GM12878 (cell line): ENCODE measurements at regions of chr22 and their contacts with region 1.

Region 1: GRCh38 chr22:24768537-24769374 is 5.8 kb downstream of the PIWIL3 start:
- DNase-seq: no peak
- ATAC-seq: peak; percentile 82
- H3K4me3 ChIP-seq: no peak overlapping the region
- H3K27ac ChIP-seq: no peak overlapping the region
- H3K4me1 ChIP-seq: no peaks in the 10 kb centered on the region
- H3K27me3 ChIP-seq: no peaks in the 10 kb centered on the region; a peak in 1 of 4 replicates
- CTCF ChIP-seq: peak; percentile 4 to 56 (median 24); a peak in 3 of 6 replicates
- EP300 ChIP-seq: no peak
- POLR2A ChIP-seq: no peak
- RAD21 ChIP-seq: peak; percentile 69

Region 2: GRCh38 chr22:24758164-24758799 is 10.5 kb before region 1 on chr22:
- CTCF ChIA-PET with region 1: interaction called, 22 read pairs
- POLR2A ChIA-PET with region 1: no interaction called
- RAD21 ChIA-PET with region 1: interaction called, 3 read pairs
- SMC1A ChIA-PET with region 1: interaction called, 4 read pairs
- in situ Hi-C with region 1: no loop called
- intact Hi-C with region 1: no loop called
- DNase-seq: no peak
- ATAC-seq: peak; percentile 45; the same call in 2 of the 3 replicates
- H3K4me3 ChIP-seq: no peak overlapping the region
- H3K27ac ChIP-seq: no peak overlapping the region
- H3K4me1 ChIP-seq: no peaks in the 10 kb centered on the region
- H3K27me3 ChIP-seq: no peaks in the 10 kb centered on the region
- CTCF ChIP-seq: peak; percentile 64 to 84 (median 81)
- EP300 ChIP-seq: no peak
- POLR2A ChIP-seq: no peak
- RAD21 ChIP-seq: peak; percentile 78

Region 3: DNA sequence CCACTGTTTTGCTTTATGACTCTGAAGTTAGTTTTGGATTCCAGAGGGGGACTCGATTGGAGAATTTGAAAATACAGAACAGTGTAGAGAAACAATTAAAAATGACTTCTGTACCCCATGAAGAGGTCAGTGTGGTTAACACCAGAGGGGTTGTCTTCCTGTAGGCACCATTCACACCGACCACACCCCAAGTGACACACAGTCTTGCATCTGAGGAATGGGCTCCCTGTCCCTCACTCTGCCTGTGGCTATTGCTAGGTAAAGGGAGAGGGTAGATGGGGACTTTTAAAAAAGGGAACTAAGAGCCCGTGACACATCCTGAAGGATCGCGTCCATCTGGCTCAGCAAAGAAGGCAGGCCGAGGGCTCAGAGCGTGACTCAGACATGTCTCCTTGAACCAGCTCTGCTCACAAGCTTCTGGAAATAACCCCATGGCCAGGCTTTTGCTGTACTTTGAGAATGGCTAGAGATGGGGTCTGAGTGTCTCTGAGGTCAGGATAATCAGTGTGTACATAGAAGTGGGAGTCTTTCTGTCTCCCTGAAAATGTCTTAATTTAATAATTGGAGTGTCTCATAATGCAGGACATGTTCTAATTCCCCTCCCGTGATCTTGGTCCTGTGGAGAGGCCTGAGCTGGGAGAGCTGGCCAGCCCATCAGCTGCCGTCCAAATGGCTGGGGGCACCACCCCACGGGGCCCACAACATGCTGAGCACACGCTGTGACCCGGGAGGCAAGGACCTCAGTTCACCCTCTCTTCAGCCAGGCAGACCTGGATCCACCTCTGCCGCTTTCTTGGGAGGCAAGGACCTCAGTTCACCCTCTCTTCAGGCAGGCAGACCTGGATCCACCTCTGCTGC is 76.5 kb after region 1 on chr22:
- CTCF ChIA-PET with region 1: interaction called, 11 read pairs
- POLR2A ChIA-PET with region 1: no interaction called
- RAD21 ChIA-PET with region 1: interaction called, 5 read pairs
- SMC1A ChIA-PET with region 1: interaction called, 4 read pairs
- in situ Hi-C with region 1: no loop called
- intact Hi-C with region 1: loop called (anchors 2 kb)
- DNase-seq: no peak
- ATAC-seq: no peak; the same call in 1 of the 3 replicates
- H3K4me3 ChIP-seq: no peak overlapping the region
- H3K27ac ChIP-seq: no peak overlapping the region
- H3K4me1 ChIP-seq: no peaks in the 10 kb centered on the region
- H3K27me3 ChIP-seq: no peaks in the 10 kb centered on the region; a peak in 1 of 4 replicates
- CTCF ChIP-seq: no peak
- EP300 ChIP-seq: no peak
- POLR2A ChIP-seq: no peak
- RAD21 ChIP-seq: no peak